ENCODE measurements at regions of chr18 and their contacts with region 1.

Region 1: DNA sequence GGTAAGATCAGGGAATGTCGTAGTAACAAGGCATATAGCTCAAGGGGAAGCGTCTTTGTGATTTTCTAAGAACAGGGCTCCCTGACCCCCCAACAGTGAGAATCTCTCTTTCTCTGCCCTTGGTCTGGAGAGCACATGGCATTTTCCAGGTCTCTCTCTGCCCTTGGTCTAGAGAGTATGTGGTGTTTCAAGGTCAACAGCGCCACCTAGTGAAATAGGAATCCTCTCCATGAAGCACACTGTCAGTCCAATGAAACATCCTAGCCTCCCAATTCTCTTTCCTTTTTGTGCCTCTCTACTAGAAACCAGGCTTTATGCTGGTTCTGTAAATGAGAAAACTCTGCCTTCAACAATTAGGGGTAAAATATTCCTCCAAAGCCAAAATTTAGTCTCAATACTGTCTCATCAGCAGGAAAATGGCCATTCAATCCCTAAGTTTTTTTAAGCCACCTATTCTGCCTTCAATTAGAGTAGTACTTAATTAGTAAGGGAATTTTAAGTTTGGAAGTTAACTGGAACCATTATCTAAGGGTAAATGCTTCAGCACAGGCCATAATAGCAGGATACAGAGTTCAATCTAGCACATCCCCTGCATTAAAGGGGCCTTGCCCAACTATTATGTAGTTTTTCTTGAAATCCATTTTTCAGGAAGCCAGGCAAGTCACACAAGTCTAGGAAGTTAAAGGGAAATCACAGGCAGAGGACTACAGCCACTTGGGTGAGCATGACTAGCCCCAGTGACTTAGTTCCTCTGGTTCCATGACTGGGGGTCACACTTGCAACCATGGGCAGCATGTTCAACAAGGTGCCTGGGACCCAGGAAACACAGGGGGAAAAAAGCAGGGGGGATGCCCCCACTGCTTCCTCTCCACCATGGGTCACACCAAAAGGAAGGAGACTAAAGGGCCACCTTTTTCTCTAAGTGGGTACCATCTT is 12.4 kb downstream of the DYM start:
- DNase-seq: peak; percentile 59
- ATAC-seq: peak; percentile 69
- H3K4me3 Mint-ChIP-seq: no peak overlapping the region
- H3K27ac Mint-ChIP-seq: no peak overlapping the region
- H3K4me1 Mint-ChIP-seq: peaks cover 7% of the 10 kb centered on the region
- H3K27me3 Mint-ChIP-seq: no peaks in the 10 kb centered on the region
- CTCF ChIP-seq: peak; percentile 76

Region 2: DNA sequence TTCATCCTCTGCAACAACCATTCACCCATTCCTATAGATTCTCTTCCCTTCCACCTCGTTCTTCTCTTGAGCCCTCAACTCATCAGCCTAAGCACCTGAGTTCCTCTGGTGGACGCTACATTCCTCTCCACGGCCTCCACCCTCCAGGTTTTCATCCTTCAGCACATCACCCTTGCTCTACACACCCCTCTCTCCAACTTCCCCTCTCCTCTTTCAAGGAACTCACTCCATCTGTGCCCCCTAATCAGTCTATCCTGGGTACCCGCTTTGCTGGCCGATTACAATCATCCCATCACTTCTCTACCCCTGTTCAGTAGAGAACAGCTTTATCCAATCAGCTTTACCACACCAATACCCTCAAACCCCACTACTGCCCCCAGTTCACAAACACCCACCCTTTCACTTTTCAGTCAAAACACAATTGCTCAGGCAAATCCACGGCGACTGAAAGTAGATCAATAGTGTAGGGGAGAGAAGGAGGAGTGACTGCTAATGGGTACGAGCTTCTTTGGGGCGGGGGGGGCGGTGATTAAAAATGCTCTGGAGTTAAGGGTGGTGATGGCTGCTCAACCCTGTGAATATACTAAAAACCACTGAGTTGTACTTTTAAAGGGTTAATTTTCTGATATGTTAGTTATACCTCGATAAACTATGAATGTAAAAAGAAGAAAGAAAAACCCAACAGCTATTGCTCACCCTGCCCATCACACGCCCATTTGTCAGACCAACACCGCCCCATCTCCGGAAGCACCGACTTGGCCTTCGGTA is 11.5 kb after region 1 on chr18:
- CTCF ChIA-PET with region 1: interaction called, 14 read pairs
- POLR2A ChIA-PET with region 1: interaction called, 8 read pairs
- intact Hi-C with region 1: no loop called
- DNase-seq: peak; percentile 56
- ATAC-seq: peak; percentile 41
- H3K4me3 Mint-ChIP-seq: peak overlapping the region; percentile 84
- H3K27ac Mint-ChIP-seq: peak overlapping the region; percentile 80
- H3K4me1 Mint-ChIP-seq: peaks cover 45% of the 10 kb centered on the region
- H3K27me3 Mint-ChIP-seq: no peaks in the 10 kb centered on the region
- CTCF ChIP-seq: no peak

Region 3: GRCh38 chr18:49500201-49500921 is 52.3 kb after region 1 on chr18:
- CTCF ChIA-PET with region 1: no interaction called
- POLR2A ChIA-PET with region 1: no interaction called
- intact Hi-C with region 1: no loop called
- DNase-seq: no peak
- ATAC-seq: no peak
- H3K4me3 Mint-ChIP-seq: no peak overlapping the region
- H3K27ac Mint-ChIP-seq: no peak overlapping the region
- H3K4me1 Mint-ChIP-seq: no peaks in the 10 kb centered on the region
- H3K27me3 Mint-ChIP-seq: peaks cover 8% of the 10 kb centered on the region
- CTCF ChIP-seq: no peak